ENCODE measurements at regions of chr14 and their contacts with region 1.

Region 1: DNA sequence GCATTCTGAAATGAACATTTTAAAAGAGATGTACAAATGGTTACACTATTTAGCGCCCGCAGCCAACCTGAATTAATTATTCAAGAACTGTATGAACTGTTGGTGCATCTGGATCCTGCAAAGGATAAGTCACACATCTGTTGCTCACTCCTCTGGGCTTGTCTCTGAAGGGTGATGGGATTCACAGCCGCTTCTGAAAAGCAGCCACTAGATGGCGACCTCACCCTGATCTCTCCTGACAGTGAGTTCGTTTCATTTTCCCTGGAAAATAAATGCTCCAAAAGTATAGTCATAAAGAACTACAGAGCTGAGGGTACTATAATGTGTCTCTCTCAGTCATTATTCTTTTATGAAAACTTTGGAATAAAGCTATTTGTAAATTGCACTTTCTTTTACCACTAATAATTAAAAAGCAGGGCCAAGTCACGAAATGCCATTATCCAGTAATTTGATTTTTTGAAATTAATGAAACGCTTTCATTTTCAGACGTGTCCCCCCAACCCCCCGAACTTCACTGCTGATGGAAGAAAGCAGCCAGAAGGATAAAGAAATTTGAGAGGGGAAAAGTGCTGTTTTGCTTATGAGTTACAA is 789.6 kb downstream of the NRXN3 start:
- DNase-seq: peak; percentile 63
- H3K4me3 Mint-ChIP-seq: no peak overlapping the region
- H3K27ac Mint-ChIP-seq: no peak overlapping the region
- H3K4me1 Mint-ChIP-seq: peaks cover 2% of the 10 kb centered on the region
- H3K27me3 Mint-ChIP-seq: peaks cover 2% of the 10 kb centered on the region

Region 2: GRCh38 chr14:78970677-78971076 is 10.9 kb after region 1 on chr14:
- CTCF ChIA-PET with region 1: interaction called, 10 read pairs
- POLR2A ChIA-PET with region 1: no interaction called
- intact Hi-C with region 1: no loop called
- DNase-seq: no peak
- H3K4me3 Mint-ChIP-seq: no peak overlapping the region
- H3K27ac Mint-ChIP-seq: no peak overlapping the region
- H3K4me1 Mint-ChIP-seq: no peaks in the 10 kb centered on the region
- H3K27me3 Mint-ChIP-seq: peaks cover 1% of the 10 kb centered on the region

Region 3: GRCh38 chr14:80850197-80850814 is 1890.5 kb after region 1 on chr14:
- CTCF ChIA-PET with region 1: interaction called, 3 read pairs
- POLR2A ChIA-PET with region 1: no interaction called
- intact Hi-C with region 1: loop called (anchors 2 kb)
- DNase-seq: no peak
- H3K4me3 Mint-ChIP-seq: no peak overlapping the region
- H3K27ac Mint-ChIP-seq: no peak overlapping the region
- H3K4me1 Mint-ChIP-seq: no peaks in the 10 kb centered on the region
- H3K27me3 Mint-ChIP-seq: no peaks in the 10 kb centered on the region